ENCODE measurements at regions of chr12 and their contacts with region 1.

Region 1: GRCh38 chr12:79420146-79420618 is 270.6 kb downstream of the PAWR start:
- DNase-seq: peak; percentile 79 to 81
- H3K4me3 ChIP-seq: no peak overlapping the region
- H3K4me3 Mint-ChIP-seq: peak overlapping the region; percentile 4
- H3K27ac Mint-ChIP-seq: peak overlapping the region; percentile 94
- H3K4me1 ChIP-seq: peaks cover 87% of the 10 kb centered on the region
- H3K4me1 Mint-ChIP-seq: peaks cover 81% of the 10 kb centered on the region
- H3K27me3 ChIP-seq: no peaks in the 10 kb centered on the region
- H3K27me3 Mint-ChIP-seq: no peaks in the 10 kb centered on the region
- CTCF ChIP-seq: peak; percentile 66 to 76

Region 2: GRCh38 chr12:78725951-78726580 is 694.1 kb before region 1 on chr12:
- CTCF ChIA-PET with region 1: no interaction called
- POLR2A ChIA-PET with region 1: no interaction called
- intact Hi-C with region 1: no loop called
- DNase-seq: peak in 1 of 2 experiments; percentile 2
- H3K4me3 ChIP-seq: no peak overlapping the region
- H3K4me3 Mint-ChIP-seq: no peak overlapping the region
- H3K27ac Mint-ChIP-seq: peak overlapping the region; percentile 48
- H3K4me1 ChIP-seq: peaks cover 16% of the 10 kb centered on the region
- H3K4me1 Mint-ChIP-seq: peaks cover 8% of the 10 kb centered on the region
- H3K27me3 ChIP-seq: no peaks in the 10 kb centered on the region
- H3K27me3 Mint-ChIP-seq: no peaks in the 10 kb centered on the region
- CTCF ChIP-seq: no peak

Region 3: DNA sequence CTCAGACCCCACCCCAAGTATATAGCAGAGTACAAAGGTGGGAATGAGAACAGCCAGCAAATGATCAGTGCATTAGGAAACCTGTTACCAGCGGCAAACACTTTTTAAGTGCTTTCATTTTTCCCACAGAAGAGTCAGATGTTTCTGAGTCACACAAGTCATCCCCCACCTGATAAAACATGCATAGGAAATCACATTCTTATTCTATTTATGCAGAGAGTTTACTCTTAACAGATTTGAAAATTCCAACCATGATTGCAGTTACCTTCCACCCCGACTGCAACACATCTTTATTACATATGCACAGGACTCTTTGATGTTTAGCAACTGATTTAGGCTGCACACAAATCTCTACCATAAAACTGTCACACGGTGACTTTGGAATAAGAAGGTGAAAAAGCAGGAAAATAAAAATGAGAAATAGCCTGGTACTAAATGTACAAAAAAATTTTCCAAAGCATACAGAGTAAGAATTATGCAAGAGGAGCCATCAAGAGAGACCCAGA is 34.2 kb after region 1 on chr12:
- CTCF ChIA-PET with region 1: no interaction called
- POLR2A ChIA-PET with region 1: no interaction called
- intact Hi-C with region 1: loop called (anchors 1 kb)
- DNase-seq: peak; percentile 30 to 35
- H3K4me3 ChIP-seq: peak overlapping the region; percentile 15; the same call in 1 of the 2 replicates
- H3K4me3 Mint-ChIP-seq: peak overlapping the region; percentile 53
- H3K27ac Mint-ChIP-seq: peak overlapping the region; percentile 81
- H3K4me1 ChIP-seq: peaks cover 29% of the 10 kb centered on the region
- H3K4me1 Mint-ChIP-seq: peaks cover 26% of the 10 kb centered on the region
- H3K27me3 ChIP-seq: no peaks in the 10 kb centered on the region
- H3K27me3 Mint-ChIP-seq: no peaks in the 10 kb centered on the region
- CTCF ChIP-seq: no peak

Region 4: GRCh38 chr12:79547735-79548609 is 127.8 kb after region 1 on chr12:
- CTCF ChIA-PET with region 1: interaction called, 23 read pairs
- POLR2A ChIA-PET with region 1: interaction called, 8 read pairs
- intact Hi-C with region 1: loop called (anchors 1 kb)
- DNase-seq: peak; percentile 69 to 74
- H3K4me3 ChIP-seq: no peak overlapping the region
- H3K4me3 Mint-ChIP-seq: peak overlapping the region; percentile 57
- H3K27ac Mint-ChIP-seq: peak overlapping the region; percentile 97
- H3K4me1 ChIP-seq: peaks cover 56% of the 10 kb centered on the region
- H3K4me1 Mint-ChIP-seq: peaks cover 56% of the 10 kb centered on the region
- H3K27me3 ChIP-seq: no peaks in the 10 kb centered on the region
- H3K27me3 Mint-ChIP-seq: no peaks in the 10 kb centered on the region
- CTCF ChIP-seq: peak; percentile 56 to 67

Region 5: GRCh38 chr12:79690638-79691493 is 270.7 kb after region 1 on chr12 and contains the start of gene PAWR:
- CTCF ChIA-PET with region 1: interaction called, 6 read pairs
- POLR2A ChIA-PET with region 1: interaction called, 5 read pairs
- intact Hi-C with region 1: loop called (anchors 1 kb)
- DNase-seq: peak; percentile 89 to 92
- H3K4me3 ChIP-seq: peak within 1 kb of the TSS; percentile 98
- H3K4me3 Mint-ChIP-seq: peak within 1 kb of the TSS; percentile 89
- H3K27ac Mint-ChIP-seq: peak within 1 kb of the TSS; percentile 90
- H3K4me1 ChIP-seq: peaks cover 19% of the 10 kb centered on the region
- H3K4me1 Mint-ChIP-seq: peaks cover 23% of the 10 kb centered on the region
- H3K27me3 ChIP-seq: no peaks in the 10 kb centered on the region
- H3K27me3 Mint-ChIP-seq: no peaks in the 10 kb centered on the region
- CTCF ChIP-seq: no peak
- total RNA-seq, gene PAWR: 157 and 163 TPM in 2 replicates

Region 6: GRCh38 chr12:79935021-79935623 is 514.9 kb after region 1 on chr12 and contains the start of gene PPP1R12A:
- CTCF ChIA-PET with region 1: no interaction called
- POLR2A ChIA-PET with region 1: no interaction called
- intact Hi-C with region 1: loop called (anchors 5 kb)
- DNase-seq: peak; percentile 97
- H3K4me3 ChIP-seq: peak within 1 kb of the TSS; percentile 100
- H3K4me3 Mint-ChIP-seq: peak within 1 kb of the TSS; percentile 83
- H3K27ac Mint-ChIP-seq: peak within 1 kb of the TSS; percentile 71
- H3K4me1 ChIP-seq: peaks cover 10% of the 10 kb centered on the region; the same call in 1 of the 2 replicates
- H3K4me1 Mint-ChIP-seq: peaks cover 5% of the 10 kb centered on the region
- H3K27me3 ChIP-seq: no peaks in the 10 kb centered on the region
- H3K27me3 Mint-ChIP-seq: no peaks in the 10 kb centered on the region
- CTCF ChIP-seq: no peak
- total RNA-seq, gene PPP1R12A: 60.7 and 62.5 TPM in 2 replicates

Measured in Caco-2 (cell line).